Psoas muscle (tissue), 8 donors: ENCODE measurements at regions of chr13 and their contacts with region 1.

Region 1: DNA sequence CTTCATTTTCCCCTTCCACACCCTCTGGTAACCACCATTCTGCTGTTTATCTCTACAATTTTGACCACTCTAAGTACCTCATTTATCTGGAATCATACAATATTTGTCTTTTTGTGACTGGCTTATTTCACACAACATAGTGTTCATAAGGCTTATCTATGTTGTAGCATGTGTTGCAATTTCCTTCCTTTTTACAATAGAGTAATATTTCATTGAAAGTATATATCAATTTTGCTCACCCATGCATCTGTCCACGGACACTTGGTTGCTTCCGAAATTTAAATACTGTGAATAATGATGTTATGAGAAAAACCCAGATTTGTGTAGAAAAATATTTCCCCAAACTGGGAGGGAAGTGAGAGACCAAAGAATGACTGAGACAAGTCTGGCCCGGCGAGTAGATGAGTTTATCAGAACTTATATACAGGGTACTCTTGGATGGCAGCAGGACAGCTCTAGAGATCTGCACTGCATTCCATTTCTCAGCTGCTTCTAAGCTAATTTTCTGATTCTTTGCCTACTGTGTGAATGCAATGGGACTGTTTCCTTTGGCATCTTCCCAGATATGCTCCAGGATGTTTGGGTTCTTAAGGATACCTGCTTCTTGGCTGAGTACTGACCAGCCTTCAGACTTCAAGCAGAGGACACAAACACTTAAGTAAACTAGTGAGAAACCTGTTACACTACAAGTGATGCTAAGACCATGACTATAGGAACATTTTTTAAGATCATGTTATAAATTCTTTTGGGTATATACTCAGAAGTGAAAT is 834.0 kb upstream of the PCDH9 start:
- DNase-seq: no peak
- ATAC-seq: no peak
- H3K4me3 ChIP-seq: no peak overlapping the region
- H3K27ac ChIP-seq: no peak overlapping the region
- H3K4me1 ChIP-seq: no peaks in the 10 kb centered on the region
- H3K27me3 ChIP-seq: no peaks in the 10 kb centered on the region
- CTCF ChIP-seq: no peak

Region 2: DNA sequence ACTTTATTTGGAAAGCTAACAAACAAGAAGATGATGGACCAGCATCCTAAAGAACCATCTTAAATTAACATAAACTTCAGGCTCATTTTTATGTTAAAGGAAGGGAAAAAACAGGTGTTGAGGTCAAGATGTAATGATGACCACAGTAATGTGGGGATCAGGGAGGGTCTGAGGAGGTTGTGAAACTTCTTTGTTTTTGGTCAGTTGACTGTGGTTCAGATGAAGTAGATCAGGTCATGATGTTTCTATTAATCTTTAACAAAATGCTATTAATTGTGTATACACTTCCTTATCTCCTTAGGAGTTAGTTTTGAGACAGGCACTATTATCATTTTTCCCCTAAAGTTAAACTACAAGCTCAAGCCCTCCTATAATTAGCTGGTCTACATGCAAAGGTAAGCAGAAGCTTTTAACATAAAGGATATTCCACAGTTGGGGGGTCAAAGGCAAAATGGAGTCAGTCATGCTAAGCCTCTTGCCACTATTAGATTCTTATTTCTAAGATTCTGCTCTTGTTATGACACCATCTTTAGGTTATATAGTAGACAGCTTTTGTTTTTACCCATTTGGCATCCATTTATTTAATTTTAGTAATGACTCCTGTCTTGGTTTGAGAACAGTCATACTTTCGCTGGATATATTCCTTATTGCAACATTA is 33.9 kb before region 1 on chr13:
- intact Hi-C with region 1: loop called in 1 of 2 experiments (anchors 1 kb)
- DNase-seq: no peak
- ATAC-seq: no peak
- H3K4me3 ChIP-seq: no peak overlapping the region
- H3K27ac ChIP-seq: no peak overlapping the region
- H3K4me1 ChIP-seq: no peaks in the 10 kb centered on the region
- H3K27me3 ChIP-seq: no peaks in the 10 kb centered on the region
- CTCF ChIP-seq: no peak

Region 3: DNA sequence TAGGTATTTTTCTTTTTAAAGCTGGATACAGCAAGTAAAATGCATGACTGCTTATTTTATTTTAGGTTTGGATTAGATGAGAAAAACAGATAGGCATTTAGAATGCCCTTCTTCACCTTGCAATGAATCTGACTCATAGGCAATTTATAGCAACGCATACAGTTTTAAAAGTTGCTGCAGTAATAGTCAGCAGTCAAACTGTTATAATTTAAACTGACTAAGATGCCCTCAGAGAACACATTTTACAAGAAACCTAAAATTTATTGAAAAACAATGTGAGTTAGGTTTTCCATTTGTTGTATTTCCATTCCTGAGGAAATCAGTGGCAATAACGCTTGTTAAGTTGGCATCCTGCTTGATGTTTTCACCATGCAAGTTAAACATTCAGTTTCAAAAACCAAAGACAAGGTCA is 294.1 kb after region 1 on chr13:
- intact Hi-C with region 1: no loop called
- DNase-seq: no peak
- ATAC-seq: no peak
- H3K4me3 ChIP-seq: no peak overlapping the region
- H3K27ac ChIP-seq: no peak overlapping the region
- H3K4me1 ChIP-seq: no peaks in the 10 kb centered on the region
- H3K27me3 ChIP-seq: no peaks in the 10 kb centered on the region
- CTCF ChIP-seq: no peak